B cell (primary cell): ENCODE measurements at regions of chr19 and their contacts with region 1.

Region 1: GRCh38 chr19:15154002-15154612 is 46.7 kb downstream of the NOTCH3 start:
- DNase-seq: peak; percentile 37
- ATAC-seq: peak; percentile 45
- H3K4me3 ChIP-seq: no peak overlapping the region
- H3K4me3 Mint-ChIP-seq: no peak overlapping the region
- H3K27ac ChIP-seq: no peak overlapping the region
- H3K27ac Mint-ChIP-seq: no peak overlapping the region
- H3K4me1 ChIP-seq: no peaks in the 10 kb centered on the region
- H3K4me1 Mint-ChIP-seq: no peaks in the 10 kb centered on the region
- H3K27me3 ChIP-seq: peaks cover 0 to 6% (median 0%) of the 10 kb centered on the region in 4 experiments
- H3K27me3 Mint-ChIP-seq: peaks cover 31% of the 10 kb centered on the region
- CTCF ChIP-seq: peak; percentile 70

Region 2: GRCh38 chr19:15091901-15092753 is 62.0 kb before region 1 on chr19:
- CTCF ChIA-PET with region 1: interaction called, 53 read pairs
- POLR2A ChIA-PET with region 1: no interaction called
- intact Hi-C with region 1: no loop called
- DNase-seq: peak; percentile 82
- ATAC-seq: peak; percentile 66
- H3K4me3 ChIP-seq: no peak overlapping the region
- H3K4me3 Mint-ChIP-seq: no peak overlapping the region
- H3K27ac ChIP-seq: no peak overlapping the region
- H3K27ac Mint-ChIP-seq: no peak overlapping the region
- H3K4me1 ChIP-seq: peaks cover 4 to 6% of the 10 kb centered on the region in 2 donors
- H3K4me1 Mint-ChIP-seq: peaks cover 2% of the 10 kb centered on the region
- H3K27me3 ChIP-seq: peaks cover 0 to 4% (median 2%) of the 10 kb centered on the region in 4 experiments
- H3K27me3 Mint-ChIP-seq: peaks cover 28% of the 10 kb centered on the region
- CTCF ChIP-seq: peak; percentile 85

Region 3: GRCh38 chr19:15101479-15102082 is 52.5 kb before region 1 on chr19:
- CTCF ChIA-PET with region 1: interaction called, 25 read pairs
- POLR2A ChIA-PET with region 1: no interaction called
- intact Hi-C with region 1: no loop called
- DNase-seq: no peak
- ATAC-seq: peak; percentile 39
- H3K4me3 ChIP-seq: no peak overlapping the region
- H3K4me3 Mint-ChIP-seq: no peak overlapping the region
- H3K27ac ChIP-seq: no peak overlapping the region
- H3K27ac Mint-ChIP-seq: no peak overlapping the region
- H3K4me1 ChIP-seq: no peaks in the 10 kb centered on the region
- H3K4me1 Mint-ChIP-seq: peaks cover 3% of the 10 kb centered on the region
- H3K27me3 ChIP-seq: peaks cover 0 to 22% (median 9%) of the 10 kb centered on the region in 4 experiments
- H3K27me3 Mint-ChIP-seq: peaks cover 37% of the 10 kb centered on the region
- CTCF ChIP-seq: peak; percentile 56

Region 4: GRCh38 chr19:15280915-15281683 is 127.0 kb after region 1 on chr19:
- CTCF ChIA-PET with region 1: no interaction called
- POLR2A ChIA-PET with region 1: no interaction called
- intact Hi-C with region 1: no loop called
- DNase-seq: no peak
- ATAC-seq: no peak
- H3K4me3 ChIP-seq: no peak overlapping the region
- H3K4me3 Mint-ChIP-seq: no peak overlapping the region
- H3K27ac ChIP-seq: peak overlapping the region; percentile 20 to 71
- H3K27ac Mint-ChIP-seq: peak overlapping the region; percentile 59
- H3K4me1 ChIP-seq: peaks cover 86 to 97% of the 10 kb centered on the region in 2 donors
- H3K4me1 Mint-ChIP-seq: peaks cover 92% of the 10 kb centered on the region
- H3K27me3 ChIP-seq: no peaks in the 10 kb centered on the region
- H3K27me3 Mint-ChIP-seq: no peaks in the 10 kb centered on the region
- CTCF ChIP-seq: no peak